Natural killer cell (primary cell): ENCODE measurements at regions of chr17 and their contacts with region 1.

Region 1: DNA sequence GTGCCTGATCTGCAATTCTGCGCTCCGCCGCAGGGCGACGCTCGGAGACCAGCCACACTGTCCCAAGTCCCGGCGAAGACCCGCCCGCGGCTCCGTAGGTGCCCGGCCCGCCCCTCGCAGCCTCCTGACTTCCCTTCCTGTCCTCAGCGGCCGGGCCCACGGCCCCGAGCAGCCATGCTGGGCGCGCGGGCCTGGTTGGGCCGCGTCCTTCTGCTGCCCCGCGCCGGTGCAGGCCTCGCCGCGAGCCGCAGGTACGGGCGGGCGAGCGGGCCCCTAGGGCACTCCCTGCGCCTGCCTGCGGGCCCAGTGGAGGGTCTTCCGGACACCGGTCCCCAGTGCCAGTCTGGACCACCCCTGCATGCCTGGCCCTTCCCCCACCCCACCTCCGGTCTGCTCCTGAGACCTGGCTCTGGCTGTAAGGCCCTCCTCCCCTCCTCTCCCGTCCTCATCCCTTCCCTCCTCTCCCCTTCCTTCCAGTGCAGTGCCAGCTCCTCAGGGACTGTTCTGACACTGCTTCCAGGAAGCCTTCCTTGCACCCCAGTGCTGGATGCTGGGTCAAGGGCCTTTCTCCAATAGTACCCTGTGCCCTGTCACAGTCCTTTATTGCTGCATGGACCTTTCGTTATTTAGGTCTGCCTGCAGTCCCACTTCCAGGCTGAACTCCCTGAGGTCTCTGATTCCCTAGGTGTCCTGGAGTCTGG is at the start of gene SPATA20:
- DNase-seq: peak; percentile 78 to 94
- ATAC-seq: peak; percentile 86 to 91 (median 90)
- H3K4me3 ChIP-seq: peak within 1 kb of the TSS; percentile 26
- H3K4me3 Mint-ChIP-seq: peak within 1 kb of the TSS; percentile 67
- H3K27ac ChIP-seq: peak within 1 kb of the TSS; percentile 17
- H3K27ac Mint-ChIP-seq: peak within 1 kb of the TSS in 1 of 2 donors; percentile 74
- H3K4me1 ChIP-seq: peaks cover 25% of the 10 kb centered on the region
- H3K4me1 Mint-ChIP-seq: peaks cover 14 to 21% of the 10 kb centered on the region in 2 donors
- H3K27me3 ChIP-seq: no peaks in the 10 kb centered on the region
- H3K27me3 Mint-ChIP-seq: peaks cover 12 to 20% of the 10 kb centered on the region in 2 donors
- CTCF ChIP-seq: peak; percentile 92
- total RNA-seq, gene SPATA20: 30.7 to 45.5 (median 32.5) TPM

Region 2: DNA sequence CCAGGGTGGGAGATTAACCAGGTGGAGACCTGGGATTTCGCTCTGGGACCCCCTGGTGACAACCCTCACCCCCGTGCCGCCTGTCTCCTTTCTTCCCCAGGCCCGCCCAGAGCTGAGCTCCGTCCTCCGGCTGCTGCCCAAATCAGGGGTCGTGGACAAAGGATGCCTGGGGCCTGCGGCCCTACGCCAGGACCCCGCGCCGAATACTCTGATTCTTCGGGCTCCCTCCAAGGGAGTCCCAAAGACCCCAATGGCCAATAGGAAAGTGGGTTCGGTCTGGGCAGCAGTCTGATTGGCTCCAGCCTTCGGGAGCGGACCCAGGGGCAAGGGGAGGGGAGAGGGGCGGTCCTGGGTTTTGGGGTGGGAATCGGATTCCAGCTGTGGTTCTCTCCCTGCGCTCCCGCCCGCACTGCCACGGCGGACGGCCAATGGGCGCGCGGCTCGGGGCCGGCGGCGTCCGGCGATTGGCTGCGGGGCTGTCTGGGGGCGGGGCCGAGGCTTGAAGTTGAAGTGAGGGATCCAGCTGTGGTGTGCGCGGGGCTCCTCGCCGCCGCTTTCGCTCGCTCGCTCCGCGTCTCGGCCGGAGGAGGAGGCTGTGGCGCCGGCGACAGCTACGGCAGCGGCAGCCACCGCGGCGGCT is 13.1 kb after region 1 on chr17 and contains the start of gene CACNA1G:
- intact Hi-C with region 1: loop called (anchors 2 kb)
- DNase-seq: peak; percentile 86 to 91
- ATAC-seq: peak; percentile 87 to 93 (median 90)
- H3K4me3 ChIP-seq: peak within 1 kb of the TSS; percentile 28
- H3K4me3 Mint-ChIP-seq: peak within 1 kb of the TSS; percentile 82
- H3K27ac ChIP-seq: no peak within 1 kb of the TSS
- H3K27ac Mint-ChIP-seq: peak within 1 kb of the TSS in 1 of 2 donors; percentile 29
- H3K4me1 ChIP-seq: peaks cover 38% of the 10 kb centered on the region
- H3K4me1 Mint-ChIP-seq: peaks cover 19 to 26% of the 10 kb centered on the region in 2 donors
- H3K27me3 ChIP-seq: peaks cover 43% of the 10 kb centered on the region
- H3K27me3 Mint-ChIP-seq: peaks cover 24 to 51% of the 10 kb centered on the region in 2 donors
- CTCF ChIP-seq: no peak
- total RNA-seq, gene CACNA1G: not detected

Region 3: DNA sequence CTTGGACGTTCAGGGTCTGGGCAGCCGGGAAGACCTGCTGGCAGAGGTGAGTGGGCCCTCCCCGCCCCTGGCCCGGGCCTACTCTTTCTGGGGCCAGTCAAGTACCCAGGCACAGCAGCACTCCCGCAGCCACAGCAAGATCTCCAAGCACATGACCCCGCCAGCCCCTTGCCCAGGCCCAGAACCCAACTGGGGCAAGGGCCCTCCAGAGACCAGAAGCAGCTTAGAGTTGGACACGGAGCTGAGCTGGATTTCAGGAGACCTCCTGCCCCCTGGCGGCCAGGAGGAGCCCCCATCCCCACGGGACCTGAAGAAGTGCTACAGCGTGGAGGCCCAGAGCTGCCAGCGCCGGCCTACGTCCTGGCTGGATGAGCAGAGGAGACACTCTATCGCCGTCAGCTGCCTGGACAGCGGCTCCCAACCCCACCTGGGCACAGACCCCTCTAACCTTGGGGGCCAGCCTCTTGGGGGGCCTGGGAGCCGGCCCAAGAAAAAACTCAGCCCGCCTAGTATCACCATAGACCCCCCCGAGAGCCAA is 78.9 kb after region 1 on chr17:
- intact Hi-C with region 1: loop called (anchors 1 kb)
- DNase-seq: peak; percentile 42 to 79
- ATAC-seq: peak in 2 of 3 donors; percentile 69 to 72
- H3K4me3 ChIP-seq: no peak overlapping the region
- H3K4me3 Mint-ChIP-seq: no peak overlapping the region
- H3K27ac ChIP-seq: no peak overlapping the region
- H3K27ac Mint-ChIP-seq: no peak overlapping the region
- H3K4me1 ChIP-seq: peaks cover 5% of the 10 kb centered on the region
- H3K4me1 Mint-ChIP-seq: peaks cover 0 to 9% of the 10 kb centered on the region in 2 donors
- H3K27me3 ChIP-seq: no peaks in the 10 kb centered on the region
- H3K27me3 Mint-ChIP-seq: peaks cover 14 to 17% of the 10 kb centered on the region in 2 donors
- CTCF ChIP-seq: peak; percentile 46

Region 4: DNA sequence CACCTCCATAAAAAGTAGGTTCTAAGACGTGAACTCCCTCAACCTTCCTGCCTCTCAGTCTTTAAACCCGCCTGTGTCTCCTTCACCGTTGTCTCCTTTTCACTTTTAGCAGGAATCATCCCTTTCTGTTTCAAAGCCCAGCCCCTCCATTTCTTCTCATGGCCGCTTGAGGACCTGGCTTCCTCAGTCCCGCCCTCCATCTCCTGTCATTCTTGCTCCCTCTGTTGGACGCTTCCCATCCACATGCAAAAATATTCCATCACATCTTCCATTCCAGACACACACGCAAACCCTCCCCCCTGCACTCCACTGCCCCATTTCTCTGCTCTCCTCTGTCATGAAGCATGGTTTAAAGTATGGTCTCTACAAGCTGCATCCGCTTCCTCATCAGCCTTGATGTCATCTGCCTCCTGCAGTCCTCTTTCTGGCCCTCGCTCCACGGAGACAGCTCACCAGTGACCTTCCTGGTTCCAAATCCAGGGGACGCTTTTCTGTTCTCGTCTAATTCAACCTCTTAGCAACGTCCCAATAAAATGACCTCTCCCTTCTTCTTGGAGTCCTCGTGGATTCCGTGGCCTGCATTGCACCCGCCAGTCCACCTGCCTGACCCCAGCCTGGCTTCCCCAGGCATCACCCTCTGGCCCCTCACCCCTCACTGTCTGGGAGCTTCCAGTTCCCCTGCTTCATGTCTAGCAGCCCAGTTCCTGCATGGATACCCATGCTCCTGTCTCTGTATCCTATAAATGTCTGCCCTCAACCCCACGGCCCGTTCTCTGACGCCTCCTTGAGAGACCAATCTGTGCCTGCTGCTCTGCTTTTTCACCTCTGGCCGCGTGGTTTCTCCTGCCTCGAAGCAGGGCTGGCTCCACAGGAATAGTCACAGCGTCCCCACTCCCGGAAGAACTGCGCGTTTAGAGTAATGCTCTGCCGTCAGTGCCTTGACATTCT is 134.4 kb after region 1 on chr17:
- intact Hi-C with region 1: loop called (anchors 10 kb)
- DNase-seq: peak in 1 of 2 donors; percentile 19
- ATAC-seq: no peak
- H3K4me3 ChIP-seq: no peak overlapping the region
- H3K4me3 Mint-ChIP-seq: no peak overlapping the region
- H3K27ac ChIP-seq: no peak overlapping the region
- H3K27ac Mint-ChIP-seq: no peak overlapping the region
- H3K4me1 ChIP-seq: no peaks in the 10 kb centered on the region
- H3K4me1 Mint-ChIP-seq: peaks cover 0 to 11% of the 10 kb centered on the region in 2 donors
- H3K27me3 ChIP-seq: no peaks in the 10 kb centered on the region
- H3K27me3 Mint-ChIP-seq: peaks cover 19 to 25% of the 10 kb centered on the region in 2 donors
- CTCF ChIP-seq: no peak

Region 5: GRCh38 chr17:50841949-50842354 is 294.8 kb after region 1 on chr17:
- intact Hi-C with region 1: loop called (anchors 2 kb)
- DNase-seq: peak; percentile 41 to 72
- ATAC-seq: peak in 2 of 3 donors; percentile 60 to 70
- H3K4me3 ChIP-seq: no peak overlapping the region
- H3K4me3 Mint-ChIP-seq: no peak overlapping the region
- H3K27ac ChIP-seq: no peak overlapping the region
- H3K27ac Mint-ChIP-seq: no peak overlapping the region
- H3K4me1 ChIP-seq: peaks cover 3% of the 10 kb centered on the region
- H3K4me1 Mint-ChIP-seq: no peaks in the 10 kb centered on the region
- H3K27me3 ChIP-seq: no peaks in the 10 kb centered on the region
- H3K27me3 Mint-ChIP-seq: no peaks in the 10 kb centered on the region
- CTCF ChIP-seq: peak; percentile 51